ENCODE measurements at regions of chr12 and their contacts with region 1.

Region 1: DNA sequence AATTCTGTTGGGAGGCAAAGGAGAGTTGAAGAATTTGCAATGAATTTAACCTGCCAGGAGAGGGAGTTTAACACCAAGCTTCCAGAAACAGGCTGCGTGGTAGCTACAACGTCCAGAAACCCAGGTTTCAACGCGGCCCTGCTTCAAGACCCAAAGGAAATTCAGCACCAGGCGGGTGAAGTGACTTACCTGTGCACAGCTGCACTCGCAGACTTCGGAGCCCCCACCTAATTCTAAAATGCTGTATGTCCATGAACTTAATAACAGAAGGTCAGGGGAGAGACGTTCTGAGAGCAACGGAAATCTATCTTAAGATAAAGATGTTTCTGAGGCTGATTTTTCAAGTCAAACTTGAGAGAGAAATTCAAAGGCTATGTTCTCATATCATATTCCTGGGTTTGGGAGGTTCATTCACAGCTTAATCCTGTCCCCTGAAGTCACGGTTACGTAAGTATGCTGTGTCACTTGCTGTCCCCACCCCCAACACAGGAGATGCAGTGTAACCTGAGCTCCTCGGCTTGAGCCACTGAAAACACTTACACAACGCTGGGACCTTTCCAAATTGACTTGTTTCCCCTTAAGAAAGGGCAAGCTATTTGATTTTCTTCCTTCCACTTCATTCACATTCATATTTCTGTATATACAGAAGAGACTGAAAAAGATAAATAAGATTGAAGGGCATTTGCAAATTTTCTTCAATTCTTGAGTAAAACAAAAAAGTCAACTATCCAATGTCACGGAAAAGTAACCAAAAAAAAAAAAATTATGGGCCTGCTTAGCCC is 22.7 kb downstream of the CLIP1 start:
- H3K4me3 Mint-ChIP-seq: peak overlapping the region; percentile 53
- H3K27ac Mint-ChIP-seq: peak overlapping the region; percentile 85
- H3K4me1 Mint-ChIP-seq: peaks cover 34% of the 10 kb centered on the region
- H3K27me3 Mint-ChIP-seq: no peaks in the 10 kb centered on the region

Region 2: DNA sequence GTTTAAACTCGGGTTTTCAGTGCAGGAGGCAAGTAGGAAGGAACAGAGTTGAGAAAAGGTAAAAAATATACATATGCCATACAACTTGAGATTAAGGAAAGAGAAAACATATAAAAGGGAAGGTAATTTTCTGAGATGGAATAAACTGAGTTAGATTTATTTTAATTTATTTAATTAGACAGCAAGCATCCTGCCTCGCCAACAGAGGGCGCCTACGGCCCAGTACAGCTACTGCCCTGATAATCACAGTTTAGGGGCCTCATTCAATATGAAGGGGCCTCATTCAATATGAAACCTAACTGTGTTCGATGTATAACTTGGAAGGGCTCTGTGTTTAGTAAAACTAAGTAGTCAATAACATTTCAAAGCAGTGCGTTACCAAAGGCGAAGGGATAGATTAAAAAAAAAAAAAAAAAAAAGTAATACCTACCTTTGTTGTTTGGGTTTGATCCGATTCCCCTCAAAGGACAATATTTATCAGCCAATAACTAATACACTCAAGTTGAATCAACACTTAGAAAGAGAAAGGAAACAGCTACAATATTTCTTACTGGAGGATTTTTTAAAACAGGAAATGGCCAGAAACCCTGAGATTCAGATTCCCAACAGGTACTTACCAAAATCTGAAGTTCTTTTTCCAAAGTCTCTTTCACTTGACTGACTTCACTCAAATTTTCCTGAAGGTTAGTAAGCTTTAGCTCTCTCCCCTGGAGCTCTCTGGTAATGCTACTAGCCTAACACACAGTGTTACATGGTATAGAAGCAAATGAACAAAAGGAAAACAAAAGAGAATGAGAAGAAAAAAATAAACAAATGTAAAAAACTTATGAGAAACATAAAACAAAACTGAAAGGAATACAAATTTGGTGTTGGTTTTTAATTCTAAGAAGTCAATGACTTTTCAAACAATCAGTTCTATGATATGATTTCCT is 63.5 kb before region 1 on chr12:
- intact Hi-C with region 1: no loop called
- H3K4me3 Mint-ChIP-seq: no peak overlapping the region
- H3K27ac Mint-ChIP-seq: no peak overlapping the region
- H3K4me1 Mint-ChIP-seq: no peaks in the 10 kb centered on the region
- H3K27me3 Mint-ChIP-seq: no peaks in the 10 kb centered on the region

Region 3: GRCh38 chr12:122350141-122350848 is 49.5 kb before region 1 on chr12:
- intact Hi-C with region 1: no loop called
- H3K4me3 Mint-ChIP-seq: no peak overlapping the region
- H3K27ac Mint-ChIP-seq: no peak overlapping the region
- H3K4me1 Mint-ChIP-seq: no peaks in the 10 kb centered on the region
- H3K27me3 Mint-ChIP-seq: no peaks in the 10 kb centered on the region

Region 4: GRCh38 chr12:122421821-122422729 is 22.3 kb after region 1 on chr12 and contains the start of gene CLIP1:
- intact Hi-C with region 1: loop called (anchors 2 kb)
- H3K4me3 Mint-ChIP-seq: peak within 1 kb of the TSS; percentile 88
- H3K27ac Mint-ChIP-seq: peak within 1 kb of the TSS; percentile 94
- H3K4me1 Mint-ChIP-seq: peaks cover 30% of the 10 kb centered on the region
- H3K27me3 Mint-ChIP-seq: no peaks in the 10 kb centered on the region

Region 5: GRCh38 chr12:122471324-122472226 is 71.8 kb after region 1 on chr12:
- intact Hi-C with region 1: loop called (anchors 1 kb)
- H3K4me3 Mint-ChIP-seq: no peak overlapping the region
- H3K27ac Mint-ChIP-seq: no peak overlapping the region
- H3K4me1 Mint-ChIP-seq: no peaks in the 10 kb centered on the region
- H3K27me3 Mint-ChIP-seq: no peaks in the 10 kb centered on the region

Measured in dendritic cell treated with granulocyte-macrophage colony-stimulating factor and Interleukin-4, amounts not matched to agents 40 ng/mL and 50 ng/mL, for 4 days (primary cell).